GM13976 (cell line): ENCODE measurements at regions of chr10 and their contacts with region 1.

Region 1: GRCh38 chr10:70549962-70550458 is 52.5 kb downstream of the PRF1 start:
- DNase-seq: peak; percentile 85
- CTCF ChIP-seq: peak; percentile 80

Region 2: DNA sequence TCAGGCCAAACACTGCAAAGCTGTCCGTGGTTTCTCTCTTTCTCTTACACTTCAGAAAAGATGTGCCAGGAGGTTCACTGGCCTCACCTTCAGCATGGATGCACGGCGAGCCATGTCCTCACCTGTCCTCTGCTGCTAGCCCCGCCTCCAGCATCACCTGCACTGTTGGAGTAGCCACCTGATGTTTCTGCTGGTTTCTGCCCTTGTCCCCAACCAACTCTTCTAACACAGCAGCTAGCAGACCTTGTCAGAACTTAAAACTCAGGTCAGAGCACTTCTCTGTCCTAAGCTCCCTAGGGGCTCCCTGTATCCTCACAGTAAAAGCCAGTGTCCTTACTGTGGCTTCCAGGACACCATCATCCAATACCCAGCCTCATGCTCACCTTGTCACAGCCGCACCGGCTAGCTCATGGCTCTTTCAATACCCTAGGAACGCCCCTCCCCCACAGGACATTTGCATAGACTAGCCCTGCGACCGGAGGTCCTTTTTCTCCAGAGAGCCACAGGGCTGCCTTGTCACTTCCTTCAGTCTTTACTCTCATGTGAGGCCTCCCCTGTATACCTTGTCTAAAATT is 56.3 kb before region 1 on chr10:
- in situ Hi-C with region 1: no loop called
- DNase-seq: peak; percentile 83
- CTCF ChIP-seq: no peak

Region 3: DNA sequence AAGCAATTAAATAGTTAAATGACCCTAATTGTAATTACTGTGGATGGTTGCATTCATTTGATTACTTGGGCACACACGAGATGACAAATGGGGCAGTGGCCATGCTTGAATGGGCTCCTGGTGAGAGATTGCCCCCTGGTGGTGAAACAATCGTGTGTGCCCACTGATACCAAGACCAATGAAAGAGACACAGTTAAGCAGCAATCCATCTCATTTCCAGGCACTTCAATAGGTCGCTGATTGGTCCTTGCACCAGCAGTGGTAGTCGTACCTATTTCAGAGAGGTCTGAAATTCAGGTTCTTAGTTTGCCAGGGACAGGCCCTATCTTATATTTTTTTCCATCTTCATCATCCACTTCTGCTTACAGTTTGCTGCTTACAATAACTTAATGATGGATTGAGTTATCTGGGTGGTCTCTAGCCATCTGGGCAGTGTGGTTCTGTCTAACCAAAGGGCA is 330.1 kb after region 1 on chr10:
- in situ Hi-C with region 1: loop called (anchors 10 kb)
- DNase-seq: peak; percentile 77
- CTCF ChIP-seq: peak; percentile 70